Activated CD4-positive, alpha-beta T cell treated with anti-CD3 and anti-CD28 coated beads, Interleukin-2, amount 10 ng/mL, durations not matched to agents 24 days and 14 days (primary cell): ENCODE measurements at regions of chr3 and their contacts with region 1.

Region 1: DNA sequence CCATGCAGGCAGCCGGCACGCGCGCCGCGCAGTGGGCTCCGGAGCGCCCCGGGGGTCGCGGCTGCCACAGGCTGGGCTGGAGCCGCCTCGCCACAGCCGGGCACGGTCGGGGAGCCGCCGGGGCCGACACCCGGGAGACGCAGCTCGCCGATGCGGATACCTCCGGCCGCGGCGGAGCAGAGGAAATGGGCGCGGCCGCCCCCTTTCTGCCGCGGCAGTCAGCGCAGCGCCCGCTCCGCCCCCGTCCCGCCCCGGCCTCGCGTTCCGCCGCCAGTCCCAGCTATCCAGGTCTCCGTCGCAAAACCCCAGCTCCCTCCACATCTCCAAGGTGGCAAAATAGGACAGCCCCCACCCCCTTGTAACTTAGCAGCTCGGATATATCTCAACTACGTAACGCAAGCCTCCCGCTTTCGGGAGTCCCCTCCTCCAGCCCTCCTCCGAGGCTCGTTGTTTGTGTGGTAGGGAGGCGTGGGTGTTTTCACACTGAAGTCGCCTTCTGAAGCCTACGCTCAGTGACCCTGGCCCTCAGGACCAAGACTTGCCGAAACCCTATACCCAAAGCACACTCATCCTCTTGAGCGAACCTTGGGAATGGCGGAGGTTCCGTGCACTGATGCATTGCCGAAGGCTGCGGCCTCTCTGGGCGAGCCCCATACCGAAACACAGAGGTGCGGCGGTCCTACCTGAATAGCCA is at the start of gene SH3BP5:
- DNase-seq: peak; percentile 94
- H3K4me3 Mint-ChIP-seq: peak within 1 kb of the TSS; percentile 92
- H3K27ac Mint-ChIP-seq: peak within 1 kb of the TSS; percentile 89
- H3K4me1 Mint-ChIP-seq: peaks cover 48% of the 10 kb centered on the region
- H3K27me3 Mint-ChIP-seq: peaks cover 2% of the 10 kb centered on the region
- total RNA-seq, gene SH3BP5: 19.5 and 19.8 TPM in 2 replicates

Region 2: DNA sequence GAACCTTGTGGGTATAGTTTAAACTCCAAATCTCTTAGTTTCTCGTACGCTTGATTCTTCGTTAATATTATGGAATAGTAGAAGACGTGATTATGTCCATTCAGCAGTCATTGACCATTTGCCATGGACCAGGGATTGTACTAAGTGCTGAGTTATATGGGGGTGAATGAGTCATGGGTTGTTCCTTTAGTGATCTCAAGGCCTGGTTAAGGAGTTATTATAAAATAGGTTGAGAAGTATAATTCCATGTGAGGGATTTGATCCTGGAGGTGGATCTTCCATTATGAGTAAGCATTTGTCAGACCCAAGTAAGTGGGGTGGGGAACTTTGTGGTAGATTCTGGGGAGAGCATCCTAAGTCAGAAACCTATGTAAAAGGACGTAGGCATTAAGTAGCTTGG is 369.8 kb before region 1 on chr3:
- intact Hi-C with region 1: no loop called
- DNase-seq: no peak
- H3K4me3 Mint-ChIP-seq: no peak overlapping the region
- H3K27ac Mint-ChIP-seq: no peak overlapping the region
- H3K4me1 Mint-ChIP-seq: peaks cover 23% of the 10 kb centered on the region
- H3K27me3 Mint-ChIP-seq: no peaks in the 10 kb centered on the region

Region 3: DNA sequence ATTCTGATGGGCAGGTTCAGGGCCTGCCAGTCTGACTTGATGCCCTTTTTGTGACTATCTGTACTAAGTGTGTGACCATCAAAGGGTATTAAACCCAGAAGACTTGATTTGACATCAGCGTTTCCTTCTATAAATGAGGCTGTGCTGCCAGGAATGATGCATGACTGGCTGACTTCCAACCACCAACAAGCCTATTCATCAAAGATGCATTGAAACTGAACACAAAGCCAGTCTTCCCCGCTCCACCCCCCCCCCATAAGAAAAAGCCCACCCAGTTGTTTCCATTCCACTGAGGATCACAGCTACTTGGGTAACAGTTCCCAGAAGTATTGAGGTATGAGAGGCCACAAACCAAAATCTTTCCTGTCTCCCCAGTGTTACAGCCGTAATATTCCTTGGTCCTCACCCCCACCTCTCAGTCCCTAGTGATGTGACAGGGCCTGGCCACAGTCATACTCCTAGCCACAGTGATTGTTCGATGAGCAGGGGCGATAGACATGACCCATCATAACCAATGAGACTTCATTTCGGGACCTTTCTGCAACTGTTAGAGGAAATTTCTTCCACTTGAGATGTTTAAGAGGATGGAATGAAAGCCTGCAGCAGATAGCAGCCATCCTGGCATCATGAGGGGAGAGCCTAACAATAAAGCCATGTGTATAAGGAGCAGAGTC is 22.8 kb before region 1 on chr3:
- intact Hi-C with region 1: loop called (anchors 1 kb)
- DNase-seq: no peak
- H3K4me3 Mint-ChIP-seq: peak overlapping the region; percentile 72
- H3K27ac Mint-ChIP-seq: peak overlapping the region; percentile 94
- H3K4me1 Mint-ChIP-seq: peaks cover 54% of the 10 kb centered on the region
- H3K27me3 Mint-ChIP-seq: no peaks in the 10 kb centered on the region

Region 4: DNA sequence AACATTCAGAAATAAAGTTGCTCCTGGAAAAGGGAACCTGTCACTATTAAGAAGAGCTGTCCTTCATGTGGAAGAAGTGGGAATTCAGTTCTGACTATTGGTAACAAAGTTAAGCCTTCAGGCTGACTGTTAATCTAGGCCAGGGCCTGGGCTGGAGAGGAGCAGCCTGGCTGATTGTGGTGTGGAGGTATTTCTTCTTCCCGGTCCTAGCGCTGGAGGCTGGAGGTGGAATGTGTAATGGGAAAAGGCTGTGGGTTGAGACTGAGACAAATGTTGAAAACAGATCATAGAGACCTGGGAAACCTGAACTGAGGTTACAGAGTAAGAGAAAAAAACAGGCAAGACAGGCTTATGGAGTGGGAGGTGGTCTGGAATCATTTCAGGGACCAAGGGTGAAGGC is 23.6 kb after region 1 on chr3:
- intact Hi-C with region 1: loop called (anchors 1 kb)
- DNase-seq: no peak
- H3K4me3 Mint-ChIP-seq: peak overlapping the region; percentile 65
- H3K27ac Mint-ChIP-seq: peak overlapping the region; percentile 90
- H3K4me1 Mint-ChIP-seq: peaks cover 33% of the 10 kb centered on the region
- H3K27me3 Mint-ChIP-seq: no peaks in the 10 kb centered on the region

Region 5: GRCh38 chr3:15377961-15378791 is 45.6 kb after region 1 on chr3:
- intact Hi-C with region 1: loop called (anchors 1 kb)
- DNase-seq: peak; percentile 99
- H3K4me3 Mint-ChIP-seq: no peak overlapping the region
- H3K27ac Mint-ChIP-seq: peak overlapping the region; percentile 86
- H3K4me1 Mint-ChIP-seq: peaks cover 14% of the 10 kb centered on the region
- H3K27me3 Mint-ChIP-seq: peaks cover 3% of the 10 kb centered on the region